HCT116 (cell line): ENCODE measurements at regions of chr1 and their contacts with region 1.

Region 1: DNA sequence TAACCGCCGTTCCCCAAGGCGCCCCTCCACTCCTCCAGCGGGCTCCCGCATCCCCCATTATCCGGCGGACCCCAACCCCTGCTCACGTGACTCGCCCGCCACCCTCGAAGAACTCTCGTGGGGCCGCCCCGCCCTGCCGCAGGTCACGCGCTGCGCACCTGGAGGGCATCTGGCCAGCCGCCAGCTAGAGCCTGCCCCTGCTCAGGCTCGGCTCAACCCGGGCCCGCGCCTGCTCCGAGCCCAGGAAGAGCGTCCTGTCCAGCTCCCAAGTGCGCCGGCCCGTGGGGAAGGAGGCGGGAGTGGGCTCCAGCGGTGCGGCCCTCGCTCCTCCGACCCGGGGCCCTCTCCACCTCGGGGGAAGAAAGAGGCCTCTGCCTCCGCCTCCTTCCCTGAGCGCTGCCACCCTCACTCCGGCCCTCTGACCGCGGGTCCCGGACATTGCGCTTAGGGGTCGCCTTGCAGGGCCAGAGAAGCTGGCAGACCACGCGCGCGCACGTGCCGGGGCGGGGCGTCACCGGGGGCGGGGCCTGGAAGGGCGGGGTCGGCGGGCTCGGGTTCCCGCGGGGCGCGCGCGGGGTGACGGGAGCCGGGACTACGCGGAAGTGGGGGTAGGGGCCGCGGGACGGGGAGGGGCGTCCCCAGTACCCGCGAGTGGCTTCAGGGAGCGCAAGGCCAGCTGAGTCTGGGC is 28.4 kb downstream of the HMGN2 start:
- DNase-seq: peak; percentile 48
- ATAC-seq: peak; percentile 77
- H3K4me3 ChIP-seq: peak overlapping the region; percentile 68 to 70
- H3K27ac ChIP-seq: peak overlapping the region; percentile 97
- H3K4me1 ChIP-seq: peaks cover 9 to 25% of the 10 kb centered on the region in 2 experiments; a peak in 3 of 4 replicates
- H3K27me3 ChIP-seq: no peaks in the 10 kb centered on the region
- CTCF ChIP-seq: no peak
- POLR2A ChIP-seq: no peak
- RAD21 ChIP-seq: no peak

Region 2: GRCh38 chr1:26384076-26384475 is 116.6 kb before region 1 on chr1:
- CTCF ChIA-PET with region 1: no interaction called
- POLR2A ChIA-PET with region 1: no interaction called
- RAD21 ChIA-PET with region 1: no interaction called
- intact Hi-C with region 1: no loop called
- DNase-seq: no peak
- ATAC-seq: no peak
- H3K4me3 ChIP-seq: no peak overlapping the region
- H3K27ac ChIP-seq: no peak overlapping the region
- H3K4me1 ChIP-seq: peaks cover 13 to 22% of the 10 kb centered on the region in 2 experiments
- H3K27me3 ChIP-seq: peaks cover 7% of the 10 kb centered on the region; the same call in 1 of the 2 replicates
- CTCF ChIP-seq: no peak
- POLR2A ChIP-seq: no peak
- RAD21 ChIP-seq: no peak

Region 3: DNA sequence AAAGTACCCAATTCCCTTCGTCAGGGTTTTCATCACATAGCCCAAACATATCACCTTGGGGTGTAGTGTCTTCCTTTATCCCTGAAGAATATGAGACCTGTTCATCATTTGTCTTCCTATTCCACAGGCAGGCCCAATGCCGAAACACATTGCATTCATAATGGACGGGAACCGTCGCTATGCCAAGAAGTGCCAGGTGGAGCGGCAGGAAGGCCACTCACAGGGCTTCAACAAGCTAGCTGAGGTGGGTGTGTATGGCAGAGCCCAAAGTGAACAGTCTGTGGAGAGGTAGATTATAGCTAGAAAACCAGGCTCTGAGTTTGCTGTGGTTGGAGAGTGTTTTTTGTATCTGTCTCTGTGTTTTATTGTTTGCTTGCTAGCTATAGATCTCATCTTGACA is 62.6 kb before region 1 on chr1:
- CTCF ChIA-PET with region 1: no interaction called
- POLR2A ChIA-PET with region 1: no interaction called
- RAD21 ChIA-PET with region 1: no interaction called
- intact Hi-C with region 1: no loop called
- DNase-seq: no peak
- ATAC-seq: no peak
- H3K4me3 ChIP-seq: no peak overlapping the region
- H3K27ac ChIP-seq: no peak overlapping the region
- H3K4me1 ChIP-seq: peaks cover 3 to 4% of the 10 kb centered on the region in 2 experiments; a peak in 2 of 4 replicates
- H3K27me3 ChIP-seq: no peaks in the 10 kb centered on the region
- CTCF ChIP-seq: no peak
- POLR2A ChIP-seq: no peak
- RAD21 ChIP-seq: no peak

Region 4: DNA sequence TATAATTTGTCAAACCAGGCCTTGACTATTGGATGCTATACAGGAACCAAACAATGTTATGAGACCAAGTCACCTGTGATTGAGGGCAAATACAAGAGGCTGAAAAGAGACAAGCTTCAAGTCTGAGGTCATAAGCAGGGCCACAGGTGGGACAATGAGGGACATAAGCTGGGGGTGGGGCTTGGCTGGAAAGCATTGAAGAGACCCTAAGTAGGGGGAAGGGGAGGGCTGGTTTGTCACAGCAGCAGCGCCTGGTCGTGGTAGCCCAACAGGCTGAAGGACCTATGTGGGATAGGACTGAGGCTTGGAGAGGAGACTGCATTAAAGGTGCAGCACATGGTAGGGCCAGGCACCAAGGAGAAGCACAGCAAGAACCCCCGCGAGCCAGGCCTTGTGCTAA is 10.5 kb before region 1 on chr1:
- CTCF ChIA-PET with region 1: interaction called, 11 read pairs
- POLR2A ChIA-PET with region 1: interaction called, 7 read pairs
- RAD21 ChIA-PET with region 1: no interaction called
- intact Hi-C with region 1: no loop called
- DNase-seq: no peak
- ATAC-seq: no peak
- H3K4me3 ChIP-seq: no peak overlapping the region
- H3K27ac ChIP-seq: no peak overlapping the region
- H3K4me1 ChIP-seq: no peaks in the 10 kb centered on the region
- H3K27me3 ChIP-seq: no peaks in the 10 kb centered on the region
- CTCF ChIP-seq: no peak
- POLR2A ChIP-seq: no peak
- RAD21 ChIP-seq: no peak

Region 5: GRCh38 chr1:26529655-26530409 is 29.2 kb after region 1 on chr1 and contains the start of gene RPS6KA1:
- CTCF ChIA-PET with region 1: interaction called, 5 read pairs
- POLR2A ChIA-PET with region 1: interaction called, 6 read pairs
- RAD21 ChIA-PET with region 1: interaction called in 1 of 2 experiments, 5 read pairs
- intact Hi-C with region 1: loop called (anchors 2 kb)
- DNase-seq: no peak
- ATAC-seq: peak; percentile 74
- H3K4me3 ChIP-seq: peak within 1 kb of the TSS; percentile 74 to 96
- H3K27ac ChIP-seq: peak within 1 kb of the TSS; percentile 85
- H3K4me1 ChIP-seq: peaks cover 12 to 36% of the 10 kb centered on the region in 2 experiments
- H3K27me3 ChIP-seq: no peaks in the 10 kb centered on the region
- CTCF ChIP-seq: no peak
- POLR2A ChIP-seq: peak; percentile 62
- RAD21 ChIP-seq: no peak
- total RNA-seq, gene RPS6KA1: 47.0 TPM

Region 6: DNA sequence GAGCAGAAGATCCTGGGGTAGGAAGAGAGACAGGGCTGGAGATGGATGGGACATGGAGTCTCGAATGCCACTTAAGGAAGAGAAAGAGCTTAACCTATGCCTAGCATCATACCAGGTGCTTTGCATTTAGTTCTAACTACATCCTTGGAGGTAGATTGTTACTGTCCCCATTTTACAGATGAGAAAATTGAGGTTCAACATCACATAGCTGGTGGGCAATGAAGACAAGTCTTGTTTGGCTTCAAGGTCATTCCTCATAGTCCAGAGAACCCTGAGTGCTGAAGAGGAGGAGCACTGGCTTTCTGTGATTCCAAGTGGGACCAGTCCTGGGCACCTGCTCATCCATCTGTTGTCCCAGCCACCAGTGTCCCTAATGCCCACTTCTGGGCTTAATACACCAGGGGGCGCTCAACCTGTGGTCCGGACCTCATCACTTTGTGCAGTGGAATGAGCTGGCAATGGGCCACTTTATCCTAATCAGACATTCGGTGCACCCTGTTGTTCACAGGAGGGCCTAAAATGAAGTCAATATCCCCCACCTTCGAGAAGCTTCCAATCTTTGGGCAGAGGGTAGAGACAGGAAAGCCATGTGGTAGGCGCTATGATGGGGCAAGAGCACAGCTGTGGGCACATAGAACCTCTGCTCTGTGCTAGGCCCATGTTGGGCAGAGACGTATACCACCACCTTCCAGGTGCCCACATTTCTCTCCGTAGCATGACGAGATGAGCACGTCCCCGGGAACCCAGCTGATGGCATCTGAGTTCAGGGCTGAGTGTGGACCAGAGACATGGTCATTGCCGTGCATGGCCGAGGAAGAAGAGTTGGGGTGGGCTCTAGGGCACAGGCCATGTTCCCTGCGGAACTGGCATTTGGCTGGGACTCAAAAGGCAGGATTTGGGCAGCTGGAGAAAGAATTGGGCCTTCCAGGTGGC is 38.1 kb after region 1 on chr1:
- CTCF ChIA-PET with region 1: interaction called, 14 read pairs
- POLR2A ChIA-PET with region 1: no interaction called
- RAD21 ChIA-PET with region 1: no interaction called
- intact Hi-C with region 1: no loop called
- DNase-seq: peak; percentile 41
- ATAC-seq: peak; percentile 87
- H3K4me3 ChIP-seq: no peak overlapping the region
- H3K27ac ChIP-seq: no peak overlapping the region
- H3K4me1 ChIP-seq: peaks cover 3 to 4% of the 10 kb centered on the region in 2 experiments; a peak in 2 of 4 replicates
- H3K27me3 ChIP-seq: no peaks in the 10 kb centered on the region
- CTCF ChIP-seq: peak; percentile 33 to 78 (median 77); a peak in 5 of 6 replicates
- POLR2A ChIP-seq: no peak
- RAD21 ChIP-seq: no peak; the same call in 1 of the 2 replicates

Region 7: DNA sequence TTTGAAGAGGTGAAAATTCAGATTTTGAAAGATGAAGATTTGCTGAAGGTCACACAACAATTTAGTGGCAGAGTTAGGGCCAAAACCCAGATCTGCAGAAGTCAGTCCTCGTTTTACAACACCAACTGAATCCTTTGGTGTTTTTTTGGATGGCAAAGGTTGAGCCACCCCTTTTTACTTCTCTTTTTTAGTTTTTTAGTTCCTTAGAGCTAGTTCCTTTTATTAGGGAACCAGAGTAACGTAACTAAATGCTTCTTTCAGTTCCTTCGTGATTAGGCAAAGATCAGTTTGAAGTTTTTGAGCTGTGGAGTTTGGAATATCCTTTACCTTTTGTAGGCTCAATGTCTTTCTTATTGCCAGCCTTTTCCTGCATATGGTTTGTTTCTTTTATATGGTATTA is 127.3 kb after region 1 on chr1:
- CTCF ChIA-PET with region 1: no interaction called
- POLR2A ChIA-PET with region 1: no interaction called
- RAD21 ChIA-PET with region 1: no interaction called
- intact Hi-C with region 1: no loop called
- DNase-seq: no peak
- ATAC-seq: no peak
- H3K4me3 ChIP-seq: no peak overlapping the region
- H3K27ac ChIP-seq: no peak overlapping the region
- H3K4me1 ChIP-seq: no peaks in the 10 kb centered on the region
- H3K27me3 ChIP-seq: no peaks in the 10 kb centered on the region
- CTCF ChIP-seq: no peak
- POLR2A ChIP-seq: no peak
- RAD21 ChIP-seq: no peak